OCI-LY7 (cell line): ENCODE measurements at regions of chr14 and their contacts with region 1.

Region 1: GRCh38 chr14:35808076-35808652 is 931 bp downstream of the RALGAPA1 start:
- DNase-seq: peak; percentile 38
- H3K4me3 ChIP-seq: peak overlapping the region; percentile 73
- H3K27ac ChIP-seq: peak overlapping the region; percentile 83
- H3K4me1 ChIP-seq: peaks cover 19% of the 10 kb centered on the region
- CTCF ChIP-seq: no peak

Region 2: GRCh38 chr14:35046048-35046741 is 762.0 kb before region 1 on chr14 and contains the start of gene FAM177A1:
- CTCF ChIA-PET with region 1: no interaction called
- POLR2A ChIA-PET with region 1: no interaction called
- intact Hi-C with region 1: loop called (anchors 5 kb)
- DNase-seq: peak; percentile 97
- H3K4me3 ChIP-seq: peak within 1 kb of the TSS; percentile 89
- H3K27ac ChIP-seq: peak within 1 kb of the TSS; percentile 57
- H3K4me1 ChIP-seq: peaks cover 18% of the 10 kb centered on the region
- CTCF ChIP-seq: no peak
- total RNA-seq, gene FAM177A1: 17.3 and 19.0 TPM in 2 replicates